Heart left ventricle (tissue), 16 donors: ENCODE measurements at regions of chr4 and their contacts with region 1.

Region 1: GRCh38 chr4:184474263-184475095 is at the start of gene IRF2:
- DNase-seq: peak; percentile 98
- ATAC-seq: peak; percentile 90 to 95 (median 91)
- H3K4me3 ChIP-seq: peak within 1 kb of the TSS; percentile 71 to 100 (median 90)
- H3K27ac ChIP-seq: peak within 1 kb of the TSS; percentile 88 to 100 (median 98)
- H3K4me1 ChIP-seq: peaks cover 4 to 67% (median 47%) of the 10 kb centered on the region in 12 donors
- H3K27me3 ChIP-seq: no peaks in the 10 kb centered on the region
- CTCF ChIP-seq: peak in 2 of 12 donors; percentile 4 to 18
- POLR2A ChIP-seq: peak in 1 of 2 donors; percentile 94
- total RNA-seq, gene IRF2: 21.7 to 47.2 (median 28.7) TPM

Region 2: DNA sequence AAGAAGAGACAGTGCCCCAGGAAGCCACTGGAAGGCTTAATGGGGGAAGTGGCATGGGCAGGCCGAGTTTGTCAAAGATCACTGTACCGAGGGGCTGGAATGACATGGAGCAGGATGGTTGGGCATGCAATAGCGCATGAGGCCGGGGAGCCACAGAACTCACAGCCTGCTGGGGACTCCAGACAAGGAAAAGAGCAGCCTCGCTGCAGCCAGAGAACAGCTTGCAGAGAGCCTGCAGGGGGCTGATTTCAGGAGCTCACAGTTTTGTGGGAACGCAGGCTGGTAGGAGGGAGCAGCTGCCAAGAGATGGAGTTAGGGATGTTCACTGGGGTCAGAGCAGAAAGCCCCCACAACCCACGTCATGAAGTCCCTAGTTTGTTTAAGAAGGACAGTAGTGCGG is 523.9 kb before region 1 on chr4:
- intact Hi-C with region 1: no loop called
- DNase-seq: no peak
- ATAC-seq: no peak
- H3K4me3 ChIP-seq: no peak overlapping the region
- H3K27ac ChIP-seq: no peak overlapping the region
- H3K4me1 ChIP-seq: peaks cover 0 to 11% (median 3%) of the 10 kb centered on the region in 12 donors
- H3K27me3 ChIP-seq: no peaks in the 10 kb centered on the region
- CTCF ChIP-seq: no peak
- POLR2A ChIP-seq: no peak

Region 3: DNA sequence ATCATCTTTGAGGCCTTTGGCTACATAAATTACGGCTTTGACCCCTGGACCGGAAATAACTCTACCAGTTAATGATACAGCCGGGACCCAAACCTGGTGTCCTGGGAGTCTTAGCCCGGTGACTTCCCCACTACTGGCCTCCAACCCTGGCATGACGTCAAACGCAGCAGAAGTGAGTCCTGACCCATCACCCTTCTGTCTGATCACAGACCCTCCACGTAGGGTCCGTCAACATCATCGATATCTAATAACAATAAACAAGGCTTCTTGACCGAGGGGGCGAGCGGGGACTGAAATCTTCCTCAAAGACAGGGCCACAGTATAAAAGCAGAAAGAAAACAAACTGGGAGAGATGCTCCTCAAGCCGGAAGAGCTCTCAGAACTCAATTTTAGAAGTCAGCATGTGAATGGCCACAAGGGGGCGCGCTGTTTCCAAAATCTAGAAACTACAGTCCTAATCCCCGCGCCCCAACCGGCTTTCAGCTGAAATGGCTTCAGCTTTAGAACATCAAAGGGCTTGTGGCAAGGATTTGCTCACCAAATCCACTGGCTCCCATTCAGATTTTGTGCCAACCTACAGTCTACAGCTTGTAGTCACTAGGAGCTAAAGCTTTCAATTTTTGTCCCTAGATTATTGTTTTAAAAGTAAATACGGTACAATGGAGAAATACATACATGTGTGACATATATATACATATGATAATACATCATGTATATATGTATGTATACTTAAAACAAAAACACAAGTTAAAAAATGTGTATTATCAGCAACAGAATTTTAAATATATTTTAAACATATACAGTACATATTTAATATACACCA is 210.4 kb before region 1 on chr4:
- intact Hi-C with region 1: loop called in 4 of 10 experiments (anchors 2 to 5 kb)
- DNase-seq: peak; percentile 91 to 94 (median 93)
- ATAC-seq: peak; percentile 63 to 85 (median 82)
- H3K4me3 ChIP-seq: no peak overlapping the region
- H3K27ac ChIP-seq: peak overlapping the region in 1 of 12 donors; percentile 1
- H3K4me1 ChIP-seq: peaks cover 0 to 39% (median 0%) of the 10 kb centered on the region in 12 donors
- H3K27me3 ChIP-seq: no peaks in the 10 kb centered on the region
- CTCF ChIP-seq: peak; percentile 86 to 99 (median 94)
- POLR2A ChIP-seq: no peak

Region 4: DNA sequence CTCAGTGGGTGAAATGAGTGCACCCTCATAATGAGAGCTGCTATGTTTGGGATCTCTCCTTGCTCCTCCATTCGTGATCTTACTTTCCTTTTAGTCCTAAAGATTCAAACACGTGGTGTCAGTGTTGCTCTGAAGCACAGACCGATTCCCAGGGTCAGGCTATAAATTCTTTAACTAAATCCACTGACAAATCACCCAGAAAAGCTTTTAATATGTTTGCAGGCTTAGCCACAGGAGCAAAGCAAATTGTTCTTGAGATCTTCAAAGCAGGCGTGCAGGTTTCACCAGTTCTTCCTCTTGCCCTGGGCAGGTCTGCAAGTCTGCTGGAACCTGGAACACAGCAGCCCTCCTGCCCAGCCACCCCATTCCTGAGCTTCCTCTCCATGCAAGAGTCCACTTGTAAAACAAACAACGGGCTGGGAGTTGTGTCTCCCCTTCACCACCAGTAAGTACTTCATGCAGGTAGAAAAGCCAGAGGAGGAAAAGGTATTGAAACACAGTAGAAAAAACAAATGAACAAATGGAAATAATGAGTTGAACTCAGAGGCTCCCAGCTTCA is 186.7 kb before region 1 on chr4:
- intact Hi-C with region 1: loop called in 5 of 10 experiments (anchors 5 to 10 kb)
- DNase-seq: no peak
- ATAC-seq: peak; percentile 45 to 79 (median 78)
- H3K4me3 ChIP-seq: no peak overlapping the region
- H3K27ac ChIP-seq: peak overlapping the region in 1 of 12 donors; percentile 1
- H3K4me1 ChIP-seq: peaks cover 0 to 15% (median 0%) of the 10 kb centered on the region in 12 donors
- H3K27me3 ChIP-seq: no peaks in the 10 kb centered on the region
- CTCF ChIP-seq: peak in 10 of 12 donors; percentile 20 to 64 (median 50)
- POLR2A ChIP-seq: no peak

Region 5: GRCh38 chr4:184384056-184384809 is 90.2 kb before region 1 on chr4:
- intact Hi-C with region 1: loop called in 7 of 10 experiments (anchors 2 to 5 kb)
- DNase-seq: peak in 1 of 5 donors; percentile 31
- ATAC-seq: peak; percentile 5 to 72 (median 34)
- H3K4me3 ChIP-seq: peak overlapping the region in 9 of 12 donors; percentile 5 to 42 (median 28)
- H3K27ac ChIP-seq: peak overlapping the region; percentile 60 to 96 (median 90)
- H3K4me1 ChIP-seq: peaks cover 18 to 78% (median 64%) of the 10 kb centered on the region in 12 donors
- H3K27me3 ChIP-seq: no peaks in the 10 kb centered on the region
- CTCF ChIP-seq: no peak
- POLR2A ChIP-seq: peak in 1 of 2 donors; percentile 6

Region 6: GRCh38 chr4:184408021-184408710 is 66.3 kb before region 1 on chr4:
- intact Hi-C with region 1: loop called in 5 of 10 experiments (anchors 5 to 10 kb)
- DNase-seq: no peak
- ATAC-seq: no peak
- H3K4me3 ChIP-seq: no peak overlapping the region
- H3K27ac ChIP-seq: peak overlapping the region in 11 of 12 donors; percentile 44 to 78 (median 62)
- H3K4me1 ChIP-seq: peaks cover 0 to 78% (median 57%) of the 10 kb centered on the region in 12 donors
- H3K27me3 ChIP-seq: no peaks in the 10 kb centered on the region
- CTCF ChIP-seq: no peak
- POLR2A ChIP-seq: no peak

Region 7: DNA sequence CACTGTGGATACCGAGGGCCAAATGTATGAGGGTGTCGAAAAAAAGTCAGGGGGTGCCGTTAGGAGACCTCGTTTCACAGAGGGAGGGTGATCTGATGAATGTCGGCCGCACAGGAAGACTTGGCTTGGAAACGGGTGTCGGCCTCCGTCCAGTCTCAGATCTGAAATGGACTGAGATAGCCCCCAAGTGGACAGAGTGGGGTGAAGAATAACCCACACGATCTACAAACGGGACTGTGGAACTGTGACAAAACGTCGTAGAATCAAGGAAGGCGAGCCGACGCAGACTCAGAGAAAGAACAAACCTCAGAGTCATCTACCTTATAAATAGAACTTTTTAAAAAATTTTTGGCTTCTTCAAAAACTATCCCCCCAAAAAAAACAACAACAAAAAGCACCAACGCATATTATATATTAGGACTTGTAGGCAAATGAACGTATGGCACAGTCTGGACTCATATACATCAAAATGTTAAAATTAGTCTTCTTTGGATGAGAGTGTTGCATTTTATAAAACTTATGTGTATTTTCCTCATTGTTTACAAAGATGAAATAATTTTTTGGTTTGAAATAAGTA is 63.6 kb after region 1 on chr4:
- intact Hi-C with region 1: loop called (anchors 1 to 5 kb)
- DNase-seq: peak; percentile 90 to 92 (median 91)
- ATAC-seq: peak; percentile 91 to 94 (median 92)
- H3K4me3 ChIP-seq: peak overlapping the region; percentile 50 to 82 (median 67)
- H3K27ac ChIP-seq: peak overlapping the region; percentile 91 to 99 (median 95)
- H3K4me1 ChIP-seq: peaks cover 0 to 43% (median 25%) of the 10 kb centered on the region in 12 donors
- H3K27me3 ChIP-seq: no peaks in the 10 kb centered on the region
- CTCF ChIP-seq: peak; percentile 50 to 86 (median 72)
- POLR2A ChIP-seq: no peak

Region 8: GRCh38 chr4:184664448-184665210 is 190.2 kb after region 1 on chr4:
- intact Hi-C with region 1: no loop called
- DNase-seq: no peak
- ATAC-seq: peak; percentile 51 to 91 (median 78)
- H3K4me3 ChIP-seq: no peak overlapping the region
- H3K27ac ChIP-seq: no peak overlapping the region
- H3K4me1 ChIP-seq: peaks cover 0 to 34% (median 6%) of the 10 kb centered on the region in 12 donors
- H3K27me3 ChIP-seq: no peaks in the 10 kb centered on the region
- CTCF ChIP-seq: no peak
- POLR2A ChIP-seq: no peak

Region 9: DNA sequence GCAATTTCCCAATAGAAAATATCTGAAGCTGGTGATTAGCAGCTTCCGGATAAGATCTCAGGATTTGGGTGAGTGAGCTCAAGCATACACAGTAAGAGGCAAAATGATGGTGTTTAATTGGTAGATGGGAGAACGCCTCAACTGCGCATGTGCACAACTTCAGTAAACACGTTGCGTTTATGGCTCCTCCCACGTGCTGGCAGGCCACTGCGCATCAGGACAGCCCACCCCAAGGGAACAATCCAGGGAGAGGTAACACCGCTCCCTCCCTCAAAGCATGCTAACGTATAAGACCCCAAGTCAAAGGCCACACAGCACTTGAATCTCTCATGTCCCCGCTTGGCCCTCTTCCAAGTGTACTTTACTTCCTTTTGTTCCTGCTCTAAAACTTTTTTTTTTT is 269.8 kb after region 1 on chr4:
- intact Hi-C with region 1: no loop called
- DNase-seq: no peak
- ATAC-seq: no peak
- H3K4me3 ChIP-seq: no peak overlapping the region
- H3K27ac ChIP-seq: no peak overlapping the region
- H3K4me1 ChIP-seq: peaks cover 0 to 43% (median 31%) of the 10 kb centered on the region in 12 donors
- H3K27me3 ChIP-seq: no peaks in the 10 kb centered on the region
- CTCF ChIP-seq: no peak
- POLR2A ChIP-seq: no peak